ENCODE measurements at regions of chr2 and their contacts with region 1.

Region 1: GRCh38 chr2:27754138-27754588 is 17.4 kb upstream of the MRPL33 start:
- DNase-seq: peak; percentile 54 to 66 (median 63)
- H3K4me3 ChIP-seq: no peak overlapping the region
- H3K4me3 Mint-ChIP-seq: no peak overlapping the region
- H3K27ac ChIP-seq: no peak overlapping the region
- H3K27ac Mint-ChIP-seq: no peak overlapping the region
- H3K4me1 ChIP-seq: no peaks in the 10 kb centered on the region
- H3K4me1 Mint-ChIP-seq: peaks cover 0 to 3% (median 0%) of the 10 kb centered on the region in 4 donors
- H3K27me3 ChIP-seq: no peaks in the 10 kb centered on the region
- H3K27me3 Mint-ChIP-seq: peaks cover 5% of the 10 kb centered on the region in 2 donors

Region 2: DNA sequence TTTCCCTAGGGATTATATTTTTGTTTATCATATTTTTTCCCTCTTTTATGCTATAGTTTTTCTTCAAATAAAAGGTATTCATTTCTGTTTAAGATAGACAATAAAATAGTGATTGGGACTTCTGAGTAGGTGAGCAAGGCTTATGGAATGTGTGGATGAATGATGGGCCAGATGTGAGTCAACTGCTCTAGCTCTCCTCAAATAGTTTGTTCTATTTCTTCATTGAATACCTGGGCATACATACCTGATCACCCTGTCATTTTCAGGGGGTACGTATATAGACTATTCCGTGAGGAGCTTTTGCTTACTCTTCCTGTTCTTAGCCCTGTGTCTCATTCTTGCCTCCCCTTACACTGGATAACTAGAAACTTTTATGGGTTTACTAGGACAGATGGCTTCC is 178.2 kb after region 1 on chr2:
- CTCF ChIA-PET with region 1: no interaction called
- POLR2A ChIA-PET with region 1: no interaction called
- intact Hi-C with region 1: no loop called
- DNase-seq: no peak
- H3K4me3 ChIP-seq: no peak overlapping the region
- H3K4me3 Mint-ChIP-seq: no peak overlapping the region
- H3K27ac ChIP-seq: no peak overlapping the region
- H3K27ac Mint-ChIP-seq: no peak overlapping the region
- H3K4me1 ChIP-seq: no peaks in the 10 kb centered on the region
- H3K4me1 Mint-ChIP-seq: peaks cover 5 to 14% (median 12%) of the 10 kb centered on the region in 4 donors
- H3K27me3 ChIP-seq: no peaks in the 10 kb centered on the region
- H3K27me3 Mint-ChIP-seq: no peaks in the 10 kb centered on the region

Region 3: GRCh38 chr2:28452534-28453081 is 698.4 kb after region 1 on chr2:
- CTCF ChIA-PET with region 1: interaction called, 7 read pairs
- POLR2A ChIA-PET with region 1: no interaction called
- intact Hi-C with region 1: loop called (anchors 1 kb)
- DNase-seq: peak; percentile 60 to 72 (median 67)
- H3K4me3 ChIP-seq: no peak overlapping the region
- H3K4me3 Mint-ChIP-seq: no peak overlapping the region
- H3K27ac ChIP-seq: no peak overlapping the region
- H3K27ac Mint-ChIP-seq: peak overlapping the region in 2 of 7 donors; percentile 13 to 36
- H3K4me1 ChIP-seq: peaks cover 6% of the 10 kb centered on the region
- H3K4me1 Mint-ChIP-seq: peaks cover 0 to 21% (median 5%) of the 10 kb centered on the region in 4 donors
- H3K27me3 ChIP-seq: no peaks in the 10 kb centered on the region
- H3K27me3 Mint-ChIP-seq: no peaks in the 10 kb centered on the region

Region 4: GRCh38 chr2:28764909-28765711 is 1010.9 kb after region 1 on chr2:
- CTCF ChIA-PET with region 1: no interaction called
- POLR2A ChIA-PET with region 1: no interaction called
- intact Hi-C with region 1: no loop called
- DNase-seq: no peak
- H3K4me3 ChIP-seq: no peak overlapping the region
- H3K4me3 Mint-ChIP-seq: peak overlapping the region in 7 of 8 donors; percentile 17 to 73 (median 27)
- H3K27ac ChIP-seq: no peak overlapping the region
- H3K27ac Mint-ChIP-seq: peak overlapping the region in 5 of 7 donors; percentile 22 to 77 (median 54)
- H3K4me1 ChIP-seq: peaks cover 97% of the 10 kb centered on the region
- H3K4me1 Mint-ChIP-seq: peaks cover 54 to 99% (median 74%) of the 10 kb centered on the region in 4 donors
- H3K27me3 ChIP-seq: no peaks in the 10 kb centered on the region
- H3K27me3 Mint-ChIP-seq: no peaks in the 10 kb centered on the region

Region 5: GRCh38 chr2:29509397-29509796 is 1755.2 kb after region 1 on chr2:
- CTCF ChIA-PET with region 1: no interaction called
- POLR2A ChIA-PET with region 1: no interaction called
- intact Hi-C with region 1: no loop called
- DNase-seq: no peak
- H3K4me3 ChIP-seq: no peak overlapping the region
- H3K4me3 Mint-ChIP-seq: no peak overlapping the region
- H3K27ac ChIP-seq: no peak overlapping the region
- H3K27ac Mint-ChIP-seq: no peak overlapping the region
- H3K4me1 ChIP-seq: no peaks in the 10 kb centered on the region
- H3K4me1 Mint-ChIP-seq: no peaks in the 10 kb centered on the region
- H3K27me3 ChIP-seq: no peaks in the 10 kb centered on the region
- H3K27me3 Mint-ChIP-seq: peaks cover 7 to 9% of the 10 kb centered on the region in 2 donors